ENCODE measurements at regions of chr18 and their contacts with region 1.

Region 1: DNA sequence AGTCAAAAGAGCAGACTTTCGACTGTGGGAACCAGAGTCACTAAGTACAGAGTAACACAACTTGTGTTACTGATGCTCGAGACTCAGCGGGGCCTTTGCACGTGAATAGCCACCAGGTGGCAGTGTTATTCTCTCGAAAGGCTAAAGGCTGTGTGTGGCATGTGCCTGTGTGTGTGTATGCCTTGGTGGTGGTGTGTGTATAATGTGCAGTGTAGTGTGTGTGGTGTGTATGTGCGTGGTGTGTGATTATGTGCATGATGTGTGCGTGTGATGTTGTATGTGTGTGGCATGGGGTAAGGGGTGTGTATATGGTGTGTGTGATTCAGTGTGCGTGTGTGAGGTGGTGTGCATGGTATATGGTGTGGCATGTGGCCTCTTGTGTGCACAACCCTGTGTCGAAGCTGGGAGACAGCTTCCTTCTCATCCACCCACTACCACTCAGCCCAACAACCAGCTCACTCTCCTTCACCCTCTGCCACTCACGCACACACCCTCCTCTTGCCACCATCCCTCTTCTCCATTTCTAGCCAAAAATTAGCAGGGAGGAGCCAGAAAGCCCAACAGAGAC is 83.0 kb upstream of the ZNF532 start:
- DNase-seq: peak; percentile 70 to 95 (median 80)
- H3K4me3 ChIP-seq: no peak overlapping the region
- H3K27ac ChIP-seq: peak overlapping the region in 1 of 5 donors; percentile 13
- H3K4me1 ChIP-seq: no peaks in the 10 kb centered on the region
- H3K27me3 ChIP-seq: no peaks in the 10 kb centered on the region
- CTCF ChIP-seq: peak; percentile 78 to 99 (median 92)
- POLR2A ChIP-seq: no peak

Region 2: GRCh38 chr18:58699551-58699950 is 82.2 kb before region 1 on chr18:
- intact Hi-C with region 1: no loop called
- DNase-seq: peak in 1 of 7 donors; percentile 7
- H3K4me3 ChIP-seq: no peak overlapping the region
- H3K27ac ChIP-seq: no peak overlapping the region
- H3K4me1 ChIP-seq: no peaks in the 10 kb centered on the region
- H3K27me3 ChIP-seq: no peaks in the 10 kb centered on the region
- CTCF ChIP-seq: no peak
- POLR2A ChIP-seq: no peak

Region 3: DNA sequence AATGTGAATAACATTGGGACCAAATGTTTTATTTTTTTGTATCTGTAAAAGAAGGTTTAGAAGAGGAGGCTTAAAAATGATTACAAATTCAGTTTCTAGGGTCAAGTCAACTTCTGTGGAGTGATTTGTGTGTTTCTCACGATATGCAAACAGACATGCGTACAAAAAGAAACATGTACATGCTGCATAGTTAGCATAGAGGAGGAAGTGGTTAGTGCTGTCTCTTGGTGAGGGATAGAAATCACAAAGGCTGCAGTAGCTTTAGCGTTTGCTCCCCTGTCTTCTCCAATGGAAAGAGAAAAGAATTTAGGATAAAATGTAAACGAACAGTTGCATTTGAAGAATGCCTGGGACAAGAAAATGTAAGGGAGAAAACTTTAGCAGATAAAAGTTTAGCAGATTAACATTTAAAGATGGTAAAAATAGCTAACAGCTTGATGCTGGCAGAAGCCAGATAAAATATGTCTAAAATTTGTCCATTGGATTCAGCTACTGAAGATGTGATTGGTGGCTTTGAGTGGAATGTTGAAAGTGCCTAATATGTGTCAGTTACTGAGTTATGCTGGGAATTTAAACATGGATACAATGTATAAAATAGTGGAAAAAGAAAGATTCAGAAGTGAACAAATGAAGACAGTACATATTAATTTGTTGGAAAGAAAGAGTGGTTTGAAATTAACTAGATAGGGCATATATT is 65.5 kb before region 1 on chr18:
- intact Hi-C with region 1: no loop called
- DNase-seq: no peak
- H3K4me3 ChIP-seq: no peak overlapping the region
- H3K27ac ChIP-seq: no peak overlapping the region
- H3K4me1 ChIP-seq: no peaks in the 10 kb centered on the region
- H3K27me3 ChIP-seq: no peaks in the 10 kb centered on the region
- CTCF ChIP-seq: no peak
- POLR2A ChIP-seq: no peak

Region 4: DNA sequence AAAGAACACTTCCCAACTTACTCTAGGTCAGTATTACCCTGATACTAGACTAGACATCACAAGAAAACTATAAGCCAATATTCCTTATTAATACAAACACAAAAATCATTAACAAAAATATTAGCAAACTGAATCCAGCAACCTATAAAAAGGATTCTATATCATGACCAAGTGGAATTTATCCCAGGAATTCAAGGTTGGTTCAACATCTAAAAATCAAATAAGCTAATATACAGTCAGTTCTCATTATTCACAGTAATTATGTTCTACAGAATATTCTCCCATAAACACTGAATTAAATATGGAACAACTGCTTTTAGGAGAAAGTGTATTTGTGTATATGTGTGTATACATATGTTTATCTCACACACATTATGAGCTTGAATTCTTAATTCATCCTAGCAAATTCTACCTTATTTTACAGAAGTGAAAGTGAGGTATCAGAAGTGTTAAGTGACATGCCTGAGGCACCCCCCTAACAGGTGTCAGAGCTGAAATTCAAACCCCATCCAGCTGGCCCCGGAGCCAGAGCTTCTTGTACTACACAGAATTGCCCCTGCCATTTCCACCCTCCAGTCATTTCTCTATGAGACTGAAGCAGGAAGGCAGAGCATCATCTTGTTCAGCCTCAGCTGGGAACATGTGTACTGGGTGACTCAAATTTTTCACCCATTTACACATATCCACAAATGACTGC is 32.7 kb before region 1 on chr18:
- intact Hi-C with region 1: no loop called
- DNase-seq: no peak
- H3K4me3 ChIP-seq: no peak overlapping the region
- H3K27ac ChIP-seq: no peak overlapping the region
- H3K4me1 ChIP-seq: no peaks in the 10 kb centered on the region
- H3K27me3 ChIP-seq: no peaks in the 10 kb centered on the region
- CTCF ChIP-seq: no peak
- POLR2A ChIP-seq: no peak

Region 5: GRCh38 chr18:58863539-58864145 is 81.9 kb after region 1 on chr18:
- intact Hi-C with region 1: no loop called
- DNase-seq: peak; percentile 20 to 67 (median 53)
- H3K4me3 ChIP-seq: peak overlapping the region in 1 of 4 donors; percentile 61
- H3K27ac ChIP-seq: peak overlapping the region in 4 of 5 donors; percentile 75 to 97 (median 87)
- H3K4me1 ChIP-seq: peaks cover 5 to 51% of the 10 kb centered on the region in 2 donors
- H3K27me3 ChIP-seq: no peaks in the 10 kb centered on the region
- CTCF ChIP-seq: no peak
- POLR2A ChIP-seq: no peak

Region 6: DNA sequence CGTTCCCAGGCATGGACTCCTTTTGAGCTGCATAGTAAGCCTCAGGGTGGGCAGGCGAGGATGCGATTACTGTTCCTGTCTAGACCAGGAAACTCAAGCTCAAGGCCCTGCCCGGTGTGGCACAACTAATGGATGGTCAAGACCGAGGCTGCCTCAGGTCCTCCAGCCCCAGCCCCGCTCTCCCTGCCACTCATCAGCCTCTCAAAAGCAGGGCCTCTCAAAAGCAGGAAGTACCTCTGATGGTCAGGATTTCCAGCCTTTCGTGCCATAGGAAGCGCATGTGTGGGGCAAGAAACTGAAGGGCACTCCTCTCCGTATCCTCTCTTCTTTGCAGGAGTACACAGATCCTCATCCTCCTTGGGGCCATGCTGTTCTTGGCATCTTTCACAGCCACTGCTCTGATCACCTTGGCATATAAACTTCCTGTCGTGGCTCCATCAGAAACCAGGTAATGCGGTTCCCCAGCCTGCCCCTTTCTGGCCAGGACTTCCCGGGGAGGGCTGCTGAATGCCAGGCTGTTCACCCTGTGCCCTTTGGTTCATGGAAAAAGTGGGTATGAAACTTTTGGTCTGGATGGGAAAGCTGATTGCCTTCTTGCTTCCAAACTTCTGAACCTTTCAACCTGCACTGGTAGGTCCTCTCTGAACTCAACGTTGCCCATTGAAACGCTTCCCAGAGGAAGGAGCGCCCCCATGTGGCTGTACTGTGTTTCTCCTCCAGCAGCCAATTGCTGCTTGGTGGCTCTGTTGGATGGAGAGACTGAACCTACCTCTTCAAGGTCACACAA is 275.2 kb after region 1 on chr18:
- intact Hi-C with region 1: loop called (anchors 2 to 5 kb)
- DNase-seq: peak; percentile 44 to 88 (median 76)
- H3K4me3 ChIP-seq: no peak overlapping the region
- H3K27ac ChIP-seq: no peak overlapping the region
- H3K4me1 ChIP-seq: no peaks in the 10 kb centered on the region
- H3K27me3 ChIP-seq: no peaks in the 10 kb centered on the region
- CTCF ChIP-seq: peak; percentile 62 to 92 (median 89)
- POLR2A ChIP-seq: no peak

Measured in adrenal gland (tissue), 19 donors.